IMR-90 (cell line): ENCODE measurements at regions of chr9 and their contacts with region 1.

Region 1: DNA sequence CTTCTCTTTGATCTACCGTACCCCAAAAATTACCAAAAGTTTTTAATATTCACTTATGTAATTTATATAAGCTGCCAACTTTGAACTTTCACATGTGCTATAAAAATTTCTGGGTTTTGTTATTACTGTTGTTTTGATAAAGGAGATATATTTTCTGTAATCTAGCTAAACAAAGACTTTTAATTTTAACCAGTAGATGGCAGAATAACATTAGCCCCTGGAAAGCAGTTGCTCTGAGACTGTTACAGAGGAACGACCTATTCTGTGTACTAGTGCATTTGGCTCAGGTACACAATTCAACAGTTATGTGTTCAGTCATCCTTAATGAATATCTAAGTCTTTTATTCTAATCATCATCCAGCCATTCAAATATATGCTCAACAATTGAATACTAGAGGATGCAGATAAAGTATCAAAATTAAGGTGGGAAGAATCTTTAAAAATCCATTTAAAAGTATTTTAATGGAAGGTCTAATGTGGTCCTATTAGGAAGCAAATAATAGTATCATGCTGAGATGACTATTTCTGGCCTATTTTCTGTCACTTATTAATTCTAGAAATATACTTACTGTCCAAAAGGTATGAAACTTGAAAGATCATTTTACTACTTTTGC is 8.6 kb downstream of the KLHL9 start:
- DNase-seq: peak; percentile 44
- ATAC-seq: peak; percentile 78
- H3K4me3 ChIP-seq: no peak overlapping the region
- H3K27ac ChIP-seq: no peak overlapping the region
- H3K4me1 ChIP-seq: 0 out of 2 replicates have a peak, but pooled peaks cover under 1% of the 10 kb centered on the region
- H3K27me3 ChIP-seq: no peaks in the 10 kb centered on the region
- CTCF ChIP-seq: peak; percentile 72
- POLR2A ChIP-seq: no peak
- RAD21 ChIP-seq: peak; percentile 83

Region 2: GRCh38 chr9:21404146-21404545 is 77.5 kb after region 1 on chr9:
- CTCF ChIA-PET with region 1: no interaction called
- POLR2A ChIA-PET with region 1: no interaction called
- dilution Hi-C with region 1: no loop called
- in situ Hi-C with region 1: no loop called
- intact Hi-C with region 1: no loop called
- DNase-seq: no peak
- ATAC-seq: no peak
- H3K4me3 ChIP-seq: no peak overlapping the region
- H3K27ac ChIP-seq: no peak overlapping the region
- H3K4me1 ChIP-seq: no peaks in the 10 kb centered on the region
- H3K27me3 ChIP-seq: peaks cover 40% of the 10 kb centered on the region
- CTCF ChIP-seq: no peak
- POLR2A ChIP-seq: no peak
- RAD21 ChIP-seq: no peak

Region 3: GRCh38 chr9:21455320-21455719 is 128.7 kb after region 1 on chr9:
- CTCF ChIA-PET with region 1: interaction called, 5 read pairs
- POLR2A ChIA-PET with region 1: no interaction called
- dilution Hi-C with region 1: no loop called
- in situ Hi-C with region 1: no loop called
- intact Hi-C with region 1: loop called (anchors 2 kb)
- DNase-seq: peak; percentile 25
- ATAC-seq: peak; percentile 81
- H3K4me3 ChIP-seq: no peak overlapping the region
- H3K27ac ChIP-seq: no peak overlapping the region
- H3K4me1 ChIP-seq: peaks cover 2% of the 10 kb centered on the region; the same call in 1 of the 2 replicates
- H3K27me3 ChIP-seq: no peaks in the 10 kb centered on the region
- CTCF ChIP-seq: peak; percentile 57
- POLR2A ChIP-seq: no peak
- RAD21 ChIP-seq: peak; percentile 56

Region 4: GRCh38 chr9:21796768-21797167 is 470.1 kb after region 1 on chr9:
- CTCF ChIA-PET with region 1: no interaction called
- POLR2A ChIA-PET with region 1: no interaction called
- dilution Hi-C with region 1: no loop called
- in situ Hi-C with region 1: loop called (anchors 5 kb)
- intact Hi-C with region 1: no loop called
- DNase-seq: peak; percentile 76
- ATAC-seq: peak; percentile 62; the same call in 1 of the 2 replicates
- H3K4me3 ChIP-seq: no peak overlapping the region
- H3K27ac ChIP-seq: no peak overlapping the region
- H3K4me1 ChIP-seq: peaks cover 3% of the 10 kb centered on the region
- H3K27me3 ChIP-seq: no peaks in the 10 kb centered on the region
- CTCF ChIP-seq: no peak
- POLR2A ChIP-seq: no peak
- RAD21 ChIP-seq: no peak

Region 5: DNA sequence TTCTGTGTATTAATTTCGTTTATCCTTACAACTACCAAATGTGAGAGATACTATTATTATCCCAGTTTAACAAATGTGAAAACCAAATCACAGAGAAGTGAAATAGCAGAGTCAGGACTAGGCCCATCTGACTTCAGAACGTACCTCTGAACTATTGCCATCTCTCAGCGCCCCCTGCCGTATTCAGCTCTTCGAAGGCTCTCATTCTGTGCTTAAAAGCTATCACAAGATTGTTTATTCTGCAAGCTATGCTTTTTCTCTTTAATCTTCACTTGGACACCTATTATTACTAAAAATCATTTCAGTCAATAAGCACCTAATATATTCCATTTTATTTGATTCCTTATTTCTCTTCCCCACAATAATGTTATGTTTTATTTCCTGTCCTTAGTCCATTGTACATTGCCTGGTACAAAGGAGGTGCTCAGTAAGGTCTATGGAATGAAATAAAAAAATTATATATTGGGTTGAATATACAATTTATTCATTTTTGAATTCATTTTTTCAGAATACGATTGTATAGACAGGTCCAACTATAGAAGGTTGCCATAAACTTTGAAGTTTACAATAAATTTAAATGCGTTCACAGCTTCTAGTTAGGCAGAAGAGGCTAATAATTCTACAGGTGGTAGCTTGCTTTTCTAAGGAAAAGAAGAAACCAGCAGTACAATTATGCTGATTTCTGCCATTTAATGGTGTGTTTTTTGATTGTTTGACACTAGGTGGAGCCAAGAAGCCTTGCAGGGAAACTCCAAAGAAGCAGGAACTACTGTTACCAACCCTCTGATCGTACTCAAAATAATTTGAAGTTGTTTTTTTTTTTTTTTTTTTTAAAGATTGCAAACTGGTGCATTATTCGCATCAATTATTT is 917.7 kb after region 1 on chr9:
- CTCF ChIA-PET with region 1: no interaction called
- POLR2A ChIA-PET with region 1: no interaction called
- dilution Hi-C with region 1: no loop called
- in situ Hi-C with region 1: no loop called
- intact Hi-C with region 1: loop called (anchors 10 kb)
- DNase-seq: peak; percentile 63
- ATAC-seq: peak; percentile 92
- H3K4me3 ChIP-seq: no peak overlapping the region
- H3K27ac ChIP-seq: no peak overlapping the region
- H3K4me1 ChIP-seq: no peaks in the 10 kb centered on the region
- H3K27me3 ChIP-seq: peaks cover 3% of the 10 kb centered on the region
- CTCF ChIP-seq: peak; percentile 67
- POLR2A ChIP-seq: no peak
- RAD21 ChIP-seq: peak; percentile 67